ENCODE measurements at regions of chr16 and their contacts with region 1.

Region 1: GRCh38 chr16:87598431-87598830 is 3.9 kb upstream of the JPH3 start:
- DNase-seq: no peak
- H3K4me3 ChIP-seq: no peak overlapping the region
- H3K27ac ChIP-seq: no peak overlapping the region
- H3K4me1 ChIP-seq: no peaks in the 10 kb centered on the region
- H3K27me3 ChIP-seq: no peaks in the 10 kb centered on the region
- CTCF ChIP-seq: no peak
- POLR2A ChIP-seq: no peak

Region 2: DNA sequence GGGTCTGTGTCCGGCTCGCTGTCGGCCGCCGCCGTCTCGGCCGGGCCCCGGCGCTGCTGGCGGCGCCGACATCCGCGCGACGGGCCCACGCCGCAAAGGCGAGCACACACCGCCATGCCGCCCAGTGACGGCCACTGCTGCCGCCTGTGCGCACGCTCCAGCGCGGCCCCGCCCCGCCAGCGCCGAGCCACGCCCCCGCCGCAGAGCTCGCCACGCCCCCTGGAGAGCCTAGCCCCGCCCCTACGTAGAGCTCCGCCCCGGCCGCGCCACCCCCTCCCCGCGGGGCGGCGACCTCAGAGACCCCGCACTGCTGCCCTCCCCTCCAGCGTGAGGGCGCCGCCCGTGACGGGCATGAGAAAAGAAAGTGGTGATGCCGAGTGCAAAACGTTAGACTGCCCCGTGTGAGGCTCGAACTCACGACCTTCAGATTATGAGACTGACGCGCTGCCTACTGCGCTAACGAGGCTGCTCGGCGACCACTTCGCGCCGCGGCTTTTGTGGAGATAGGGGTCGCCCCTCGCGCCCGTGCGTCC is 214.7 kb before region 1 on chr16 and contains the start of gene FBXO31:
- intact Hi-C with region 1: no loop called
- DNase-seq: peak; percentile 90
- H3K4me3 ChIP-seq: peak within 1 kb of the TSS; percentile 78 to 80
- H3K27ac ChIP-seq: peak within 1 kb of the TSS; percentile 90 to 95
- H3K4me1 ChIP-seq: peaks cover 43% of the 10 kb centered on the region
- H3K27me3 ChIP-seq: no peaks in the 10 kb centered on the region
- CTCF ChIP-seq: no peak
- POLR2A ChIP-seq: peak; percentile 88
- total RNA-seq, gene FBXO31: 115 to 215 TPM

Region 3: GRCh38 chr16:87581833-87582203 is 16.6 kb before region 1 on chr16:
- intact Hi-C with region 1: no loop called
- DNase-seq: peak; percentile 88
- H3K4me3 ChIP-seq: no peak overlapping the region
- H3K27ac ChIP-seq: peak overlapping the region; percentile 86 to 95
- H3K4me1 ChIP-seq: peaks cover 22% of the 10 kb centered on the region
- H3K27me3 ChIP-seq: no peaks in the 10 kb centered on the region
- CTCF ChIP-seq: no peak
- POLR2A ChIP-seq: no peak

Region 4: DNA sequence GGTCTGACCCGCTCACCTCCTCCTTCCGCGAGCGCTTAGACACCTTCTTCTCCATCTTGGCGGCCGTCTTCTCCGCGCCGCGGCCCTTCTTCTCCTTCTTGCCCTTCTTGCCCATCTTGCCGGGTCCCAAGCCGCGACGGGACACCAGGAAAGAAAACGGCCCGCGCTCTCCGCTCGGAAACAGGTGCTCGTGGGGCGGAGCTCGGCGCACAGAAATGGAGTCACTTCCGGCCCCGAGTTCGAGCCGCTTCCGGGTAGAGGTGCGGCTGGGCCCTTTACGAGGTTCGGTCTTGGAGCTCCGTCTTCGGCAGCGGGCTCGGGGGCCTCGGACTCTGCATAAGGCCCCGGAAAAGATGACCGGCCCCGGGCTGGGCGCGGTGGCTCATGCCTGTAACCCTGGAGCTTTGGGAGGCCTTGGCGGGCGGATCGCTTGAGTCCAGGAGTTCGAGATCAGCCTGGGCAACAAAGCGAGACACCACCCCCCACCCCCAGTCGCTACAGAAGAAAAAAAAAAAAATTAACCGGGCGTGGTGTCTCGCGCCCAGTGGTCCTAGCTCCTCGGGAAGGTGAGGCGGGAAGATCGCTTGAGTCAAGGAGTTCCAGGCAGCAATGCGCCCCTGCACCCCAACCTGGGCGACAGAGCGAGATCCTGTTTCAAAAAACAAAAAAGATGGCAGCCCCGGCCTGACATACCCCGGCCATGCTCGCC is 167.5 kb after region 1 on chr16 and contains the start of gene KLHDC4:
- intact Hi-C with region 1: loop called (anchors 10 kb)
- DNase-seq: peak; percentile 95
- H3K4me3 ChIP-seq: peak within 1 kb of the TSS; percentile 81 to 86
- H3K27ac ChIP-seq: peak within 1 kb of the TSS; percentile 78 to 79
- H3K4me1 ChIP-seq: peaks cover 11% of the 10 kb centered on the region
- H3K27me3 ChIP-seq: no peaks in the 10 kb centered on the region
- CTCF ChIP-seq: no peak
- POLR2A ChIP-seq: peak; percentile 41
- total RNA-seq, gene KLHDC4: 79.2 to 130 TPM

Measured in testis (tissue), 5 donors.